ENCODE measurements at regions of chr13 and their contacts with region 1.

Region 1: GRCh38 chr13:51058461-51059167 is 52.5 kb downstream of the C13orf42 start:
- DNase-seq: peak; percentile 91
- H3K4me3 ChIP-seq: no peak overlapping the region
- H3K27ac ChIP-seq: peak overlapping the region; percentile 28
- H3K4me1 ChIP-seq: peaks cover 16% of the 10 kb centered on the region
- H3K27me3 ChIP-seq: no peaks in the 10 kb centered on the region
- CTCF ChIP-seq: no peak

Region 2: GRCh38 chr13:50617134-50617721 is 441.4 kb before region 1 on chr13:
- CTCF ChIA-PET with region 1: no interaction called
- POLR2A ChIA-PET with region 1: no interaction called
- intact Hi-C with region 1: no loop called
- DNase-seq: no peak
- H3K4me3 ChIP-seq: no peak overlapping the region
- H3K27ac ChIP-seq: no peak overlapping the region
- H3K4me1 ChIP-seq: no peaks in the 10 kb centered on the region
- H3K27me3 ChIP-seq: no peaks in the 10 kb centered on the region
- CTCF ChIP-seq: no peak

Region 3: GRCh38 chr13:50891206-50891605 is 167.4 kb before region 1 on chr13:
- CTCF ChIA-PET with region 1: no interaction called
- POLR2A ChIA-PET with region 1: interaction called, 10 read pairs
- intact Hi-C with region 1: no loop called
- DNase-seq: no peak
- H3K4me3 ChIP-seq: no peak overlapping the region
- H3K27ac ChIP-seq: no peak overlapping the region
- H3K4me1 ChIP-seq: no peaks in the 10 kb centered on the region
- H3K27me3 ChIP-seq: no peaks in the 10 kb centered on the region
- CTCF ChIP-seq: no peak

Measured in A673 (cell line).